Cardiac septum (tissue), 1 donor: ENCODE measurements at regions of chr11 and their contacts with region 1.

Region 1: GRCh38 chr11:120335908-120336640 is at the start of gene ARHGEF12:
- DNase-seq: peak; percentile 96
- total RNA-seq, gene ARHGEF12: 138 TPM

Region 2: GRCh38 chr11:120248551-120249278 is 87.4 kb before region 1 on chr11:
- intact Hi-C with region 1: no loop called
- DNase-seq: no peak

Region 3: GRCh38 chr11:120400564-120401364 is 64.7 kb after region 1 on chr11:
- intact Hi-C with region 1: loop called (anchors 1 kb)
- DNase-seq: no peak

Region 4: DNA sequence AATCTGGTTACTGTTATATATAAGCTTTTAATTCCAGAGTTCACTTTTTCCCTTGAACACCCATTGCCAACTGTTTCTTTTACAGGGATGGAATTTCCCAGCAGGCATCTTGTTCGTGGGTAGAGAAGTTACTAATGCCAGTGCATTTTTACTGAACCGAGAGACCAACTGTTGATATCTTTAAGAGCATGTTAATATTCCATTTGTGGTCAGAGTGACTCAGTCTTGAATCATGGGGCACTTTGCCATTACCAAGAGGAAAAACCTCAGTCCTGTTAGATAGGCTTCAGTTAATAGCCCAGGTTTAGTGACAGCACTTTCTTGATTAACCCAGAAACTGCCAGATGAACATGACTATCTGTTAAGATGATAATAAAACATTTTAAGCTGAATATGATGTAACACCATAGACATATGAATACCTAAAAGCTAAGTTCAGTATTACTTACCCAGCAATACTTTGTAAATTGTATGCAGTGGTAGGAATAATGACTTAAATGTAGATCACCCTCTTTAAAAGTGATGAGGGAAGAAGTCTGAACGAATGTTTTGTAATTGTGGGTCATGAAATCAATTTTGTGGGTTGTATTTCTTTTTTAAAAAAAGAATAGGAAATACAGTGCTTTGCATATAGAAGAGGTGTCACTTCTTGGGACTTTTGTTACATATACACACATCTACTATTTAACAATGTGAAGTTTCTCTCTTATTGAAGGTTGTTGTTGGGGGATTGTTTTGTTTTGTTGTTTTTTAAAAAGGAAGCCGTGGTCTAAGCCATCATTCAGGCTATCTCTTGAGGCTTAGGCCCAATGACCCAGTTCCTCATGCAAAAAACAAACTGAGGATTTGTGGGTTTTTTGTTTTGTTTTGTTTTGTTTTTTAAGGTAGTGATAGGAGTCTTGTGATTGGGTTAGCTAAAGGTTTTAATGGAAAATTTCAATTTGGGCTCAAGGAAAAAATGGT is 96.3 kb after region 1 on chr11:
- intact Hi-C with region 1: loop called (anchors 2 kb)
- DNase-seq: no peak

Region 5: GRCh38 chr11:120489799-120490198 is 153.7 kb after region 1 on chr11:
- intact Hi-C with region 1: loop called (anchors 5 kb)
- DNase-seq: no peak

Region 6: DNA sequence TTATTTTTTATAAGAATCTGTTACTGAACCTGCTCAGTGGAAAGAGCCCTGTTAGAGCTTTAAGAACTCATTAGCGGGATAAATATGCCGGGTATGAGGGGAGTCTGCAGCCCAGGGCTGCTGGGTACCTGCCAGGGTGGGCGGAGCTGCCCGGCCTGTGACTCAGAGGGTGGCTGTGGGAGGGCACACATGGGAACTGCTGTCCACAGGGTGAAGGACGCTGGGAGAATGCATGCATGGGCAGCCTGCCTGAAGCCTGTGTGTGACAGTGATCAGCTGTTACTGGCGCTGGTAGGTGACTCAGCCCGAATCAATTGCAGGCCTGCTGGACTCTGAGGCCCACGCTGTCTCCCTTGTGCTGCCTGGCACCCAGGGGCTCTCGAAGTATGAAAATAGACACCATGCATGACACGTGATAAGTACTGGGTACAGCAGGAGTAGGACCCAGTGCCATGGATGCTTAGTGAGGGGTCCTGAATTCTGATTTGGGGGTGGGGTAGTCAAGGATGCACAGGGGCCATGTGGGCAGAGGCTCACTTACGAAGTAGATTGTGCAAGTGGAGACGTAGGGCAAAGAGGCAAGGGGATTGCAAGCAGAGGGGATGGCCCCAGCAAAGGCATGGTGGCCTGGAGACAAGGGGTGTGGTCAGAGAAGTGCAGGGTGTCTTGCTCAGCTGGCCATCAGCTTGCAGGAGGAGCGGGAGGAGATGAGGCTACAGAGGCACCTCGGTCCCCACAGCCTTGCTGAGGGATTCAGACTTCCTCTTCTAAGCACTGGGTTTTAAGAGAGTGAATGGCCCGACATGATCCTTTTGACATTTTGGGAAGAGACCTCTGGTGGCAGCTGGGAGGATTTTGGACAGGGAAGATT is 212.0 kb after region 1 on chr11:
- intact Hi-C with region 1: loop called (anchors 5 kb)
- DNase-seq: peak; percentile 92

Region 7: GRCh38 chr11:120912504-120912903 is 576.4 kb after region 1 on chr11:
- intact Hi-C with region 1: no loop called
- DNase-seq: no peak